Uterus (tissue), 4 donors: ENCODE measurements at regions of chr22 and their contacts with region 1.

Region 1: GRCh38 chr22:45553351-45554039 is 50.8 kb downstream of the FBLN1 start:
- DNase-seq: peak; percentile 82 to 86
- H3K4me3 ChIP-seq: no peak overlapping the region
- H3K27ac ChIP-seq: peak overlapping the region; percentile 88 to 94
- H3K4me1 ChIP-seq: peaks cover 9 to 22% of the 10 kb centered on the region in 2 donors
- H3K27me3 ChIP-seq: no peaks in the 10 kb centered on the region
- CTCF ChIP-seq: peak; percentile 89 to 95 (median 92)
- POLR2A ChIP-seq: no peak

Region 2: GRCh38 chr22:45268958-45269844 is 284.3 kb before region 1 on chr22:
- intact Hi-C with region 1: loop called (anchors 5 kb)
- DNase-seq: peak; percentile 83 to 89
- H3K4me3 ChIP-seq: peak overlapping the region; percentile 45
- H3K27ac ChIP-seq: peak overlapping the region; percentile 39 to 40
- H3K4me1 ChIP-seq: no peaks in the 10 kb centered on the region
- H3K27me3 ChIP-seq: no peaks in the 10 kb centered on the region
- CTCF ChIP-seq: peak; percentile 65 to 98 (median 97)
- POLR2A ChIP-seq: no peak

Region 3: GRCh38 chr22:45441138-45441537 is 112.4 kb before region 1 on chr22:
- intact Hi-C with region 1: loop called (anchors 5 kb)
- DNase-seq: peak; percentile 73
- H3K4me3 ChIP-seq: no peak overlapping the region
- H3K27ac ChIP-seq: peak overlapping the region; percentile 49 to 59
- H3K4me1 ChIP-seq: no peaks in the 10 kb centered on the region
- H3K27me3 ChIP-seq: no peaks in the 10 kb centered on the region
- CTCF ChIP-seq: peak; percentile 71 to 87 (median 72)
- POLR2A ChIP-seq: no peak